ENCODE measurements at regions of chr3 and their contacts with region 1.

Region 1: GRCh38 chr3:52444860-52445793 is at the start of gene SEMA3G:
- DNase-seq: peak; percentile 89
- ATAC-seq: peak; percentile 96
- H3K4me3 Mint-ChIP-seq: no peak within 1 kb of the TSS
- H3K27ac Mint-ChIP-seq: no peak within 1 kb of the TSS
- H3K4me1 Mint-ChIP-seq: no peaks in the 10 kb centered on the region
- H3K27me3 Mint-ChIP-seq: no peaks in the 10 kb centered on the region
- total RNA-seq, gene SEMA3G: not detected

Region 2: GRCh38 chr3:52001443-52001974 is 443.6 kb before region 1 on chr3:
- CTCF ChIA-PET with region 1: interaction called, 4 read pairs
- POLR2A ChIA-PET with region 1: no interaction called
- intact Hi-C with region 1: loop called in 1 of 2 experiments (anchors 2 kb)
- DNase-seq: peak; percentile 91
- ATAC-seq: peak; percentile 97
- H3K4me3 Mint-ChIP-seq: no peak overlapping the region
- H3K27ac Mint-ChIP-seq: no peak overlapping the region
- H3K4me1 Mint-ChIP-seq: peaks cover 16% of the 10 kb centered on the region
- H3K27me3 Mint-ChIP-seq: no peaks in the 10 kb centered on the region

Region 3: GRCh38 chr3:52407779-52408178 is 37.3 kb before region 1 on chr3:
- CTCF ChIA-PET with region 1: interaction called, 4 read pairs
- POLR2A ChIA-PET with region 1: no interaction called
- intact Hi-C with region 1: loop called in 1 of 2 experiments (anchors 1 kb)
- DNase-seq: no peak
- ATAC-seq: no peak
- H3K4me3 Mint-ChIP-seq: peak overlapping the region; percentile 94
- H3K27ac Mint-ChIP-seq: no peak overlapping the region
- H3K4me1 Mint-ChIP-seq: peaks cover 33% of the 10 kb centered on the region
- H3K27me3 Mint-ChIP-seq: no peaks in the 10 kb centered on the region

Region 4: DNA sequence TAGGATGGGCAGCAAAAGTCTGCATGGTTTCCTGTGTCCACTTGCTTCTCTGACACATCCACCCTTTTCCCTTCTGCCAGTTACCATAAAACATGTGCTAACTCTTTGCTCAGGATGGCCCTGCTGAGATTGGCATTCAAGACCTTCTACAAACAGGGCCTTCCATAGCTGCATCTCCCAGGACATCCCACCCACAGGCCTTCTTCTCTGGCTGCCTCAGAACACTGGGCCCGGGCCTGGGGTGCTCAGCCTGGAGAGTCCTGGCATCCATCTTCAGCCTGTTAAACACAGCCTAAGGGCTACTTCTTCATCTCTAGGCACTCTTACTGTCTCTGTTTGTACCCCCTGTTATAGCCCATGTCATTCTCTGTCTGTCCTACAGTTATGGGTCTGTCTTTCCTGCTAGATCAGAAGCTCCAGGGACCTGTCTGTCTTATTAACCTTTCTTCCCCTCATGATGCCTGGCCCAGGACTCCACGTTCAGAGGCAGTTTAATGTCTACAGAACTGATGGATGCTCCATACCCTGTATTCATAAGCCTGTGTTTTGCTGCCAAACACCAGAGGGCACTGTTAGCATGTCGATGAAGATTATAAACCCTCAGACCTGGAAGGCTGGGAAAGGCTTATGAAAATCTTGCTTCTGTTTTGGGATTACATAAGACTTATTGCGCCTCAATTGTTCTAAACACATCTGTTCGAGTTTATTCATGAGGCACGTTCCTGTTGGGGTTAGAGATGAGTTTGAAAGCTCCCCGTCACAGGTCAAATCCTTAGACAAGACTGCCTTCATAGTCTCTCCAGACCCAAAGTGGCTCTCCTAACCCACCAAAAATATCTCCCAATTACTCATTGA is 16.7 kb before region 1 on chr3:
- CTCF ChIA-PET with region 1: interaction called, 97 read pairs
- POLR2A ChIA-PET with region 1: no interaction called
- intact Hi-C with region 1: loop called (anchors 1 kb)
- DNase-seq: peak; percentile 61
- ATAC-seq: peak; percentile 90
- H3K4me3 Mint-ChIP-seq: no peak overlapping the region
- H3K27ac Mint-ChIP-seq: no peak overlapping the region
- H3K4me1 Mint-ChIP-seq: no peaks in the 10 kb centered on the region
- H3K27me3 Mint-ChIP-seq: no peaks in the 10 kb centered on the region

Region 5: DNA sequence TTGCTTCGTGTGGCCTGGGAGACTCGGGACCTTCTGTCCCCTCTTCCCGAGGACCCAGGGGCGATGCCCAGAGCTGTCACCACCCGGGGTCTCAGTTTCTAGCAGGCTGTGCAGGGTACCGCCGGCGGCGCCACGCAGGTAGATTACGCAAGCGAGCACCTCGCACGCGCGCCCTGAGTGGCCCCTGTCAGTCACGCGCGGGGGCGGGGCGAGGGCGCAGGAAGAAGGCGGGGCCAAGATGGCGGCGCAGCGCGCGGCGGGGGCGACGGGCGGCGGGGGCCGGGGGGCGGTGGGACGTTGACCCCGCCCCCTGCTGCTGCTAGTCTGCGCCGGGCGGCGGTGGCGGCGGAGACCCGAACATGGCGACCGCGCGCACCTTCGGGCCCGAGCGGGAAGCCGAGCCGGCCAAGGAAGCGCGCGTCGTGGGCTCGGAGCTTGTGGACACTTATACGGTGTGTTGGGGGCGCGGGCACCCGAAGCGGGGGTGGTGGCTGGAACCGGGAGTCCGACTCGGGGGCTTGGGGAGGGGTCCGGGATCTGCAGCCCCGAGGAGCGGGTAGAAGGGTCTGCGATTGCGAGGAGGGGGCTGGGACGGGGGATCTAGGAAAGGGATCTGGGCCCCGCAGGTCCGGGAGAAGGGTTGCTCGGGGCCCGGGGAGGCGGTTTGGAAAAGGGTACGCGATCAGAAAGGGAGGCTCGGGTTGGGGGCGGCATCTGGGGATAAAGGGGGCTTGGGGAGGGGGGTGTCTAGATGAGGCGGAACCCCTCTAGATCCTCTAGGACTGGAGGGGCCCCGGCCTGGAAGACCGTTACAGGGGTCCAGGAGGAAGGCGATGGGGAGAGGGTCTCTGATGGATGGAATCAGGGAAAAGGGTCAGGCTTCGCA is 10.4 kb after region 1 on chr3 and contains the start of gene NISCH:
- CTCF ChIA-PET with region 1: interaction called, 34 read pairs
- POLR2A ChIA-PET with region 1: no interaction called
- intact Hi-C with region 1: no loop called
- DNase-seq: peak; percentile 98
- ATAC-seq: peak; percentile 88
- H3K4me3 Mint-ChIP-seq: peak within 1 kb of the TSS; percentile 96
- H3K27ac Mint-ChIP-seq: peak within 1 kb of the TSS; percentile 95
- H3K4me1 Mint-ChIP-seq: peaks cover 36% of the 10 kb centered on the region
- H3K27me3 Mint-ChIP-seq: no peaks in the 10 kb centered on the region
- total RNA-seq, gene NISCH: 61.4 to 68.9 TPM